HepG2 (cell line): ENCODE measurements at regions of chr6 and their contacts with region 1.

Region 1: GRCh38 chr6:47103931-47104330 is 61.8 kb upstream of the ADGRF1 start:
- DNase-seq: no peak
- ATAC-seq: no peak
- H3K4me3 ChIP-seq: no peak overlapping the region
- H3K27ac ChIP-seq: no peak overlapping the region
- H3K4me1 ChIP-seq: peaks cover 28% of the 10 kb centered on the region
- H3K27me3 ChIP-seq: no peaks in the 10 kb centered on the region
- CTCF ChIP-seq: no peak
- EP300 ChIP-seq: no peak
- POLR2A ChIP-seq: no peak
- RAD21 ChIP-seq: no peak

Region 2: DNA sequence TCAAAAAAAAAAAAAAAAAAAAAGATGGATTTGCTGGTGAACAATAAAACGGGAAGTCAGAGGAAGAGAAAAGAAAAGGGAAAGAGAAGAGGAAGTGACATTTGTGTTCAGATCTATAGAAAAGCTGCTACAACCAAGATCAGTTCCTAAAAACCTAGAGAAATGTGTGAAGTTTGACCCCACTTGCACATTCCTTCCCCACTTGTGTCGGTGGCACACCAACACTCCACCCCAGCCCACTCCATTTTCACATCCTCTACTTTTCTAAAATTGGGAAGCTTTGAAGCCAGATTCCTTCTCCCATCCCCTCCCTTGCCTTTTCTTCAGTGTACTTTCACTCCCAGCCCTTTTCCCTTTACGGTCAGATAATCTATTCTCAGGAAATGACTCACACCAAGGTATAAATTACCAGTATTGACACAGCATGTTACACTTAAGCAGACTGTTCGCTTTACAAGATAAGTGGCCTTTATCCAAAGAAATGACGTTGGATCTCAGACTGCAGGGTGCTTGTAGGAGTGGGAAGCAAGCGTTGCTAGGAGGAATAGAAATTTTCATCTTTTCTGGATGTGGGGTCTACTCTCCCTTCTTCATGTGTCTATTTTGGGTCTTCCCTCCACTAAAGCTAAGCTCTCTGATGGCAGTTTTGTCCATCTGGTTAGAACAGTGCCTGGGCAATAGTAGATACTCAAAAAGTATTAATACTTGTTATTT is 30.7 kb after region 1 on chr6:
- CTCF ChIA-PET with region 1: no interaction called
- POLR2A ChIA-PET with region 1: interaction called, 4 read pairs
- in situ Hi-C with region 1: no loop called
- intact Hi-C with region 1: loop called (anchors 2 kb)
- DNase-seq: peak; percentile 91
- ATAC-seq: peak; percentile 77
- H3K4me3 ChIP-seq: peak overlapping the region in 2 of 3 experiments; percentile 7; a peak in 2 of 6 replicates
- H3K27ac ChIP-seq: peak overlapping the region; percentile 74
- H3K4me1 ChIP-seq: peaks cover 84% of the 10 kb centered on the region
- H3K27me3 ChIP-seq: no peaks in the 10 kb centered on the region
- CTCF ChIP-seq: no peak
- EP300 ChIP-seq: peak in 1 of 2 experiments; percentile 97; a peak in 2 of 4 replicates
- POLR2A ChIP-seq: no peak
- RAD21 ChIP-seq: no peak

Region 3: DNA sequence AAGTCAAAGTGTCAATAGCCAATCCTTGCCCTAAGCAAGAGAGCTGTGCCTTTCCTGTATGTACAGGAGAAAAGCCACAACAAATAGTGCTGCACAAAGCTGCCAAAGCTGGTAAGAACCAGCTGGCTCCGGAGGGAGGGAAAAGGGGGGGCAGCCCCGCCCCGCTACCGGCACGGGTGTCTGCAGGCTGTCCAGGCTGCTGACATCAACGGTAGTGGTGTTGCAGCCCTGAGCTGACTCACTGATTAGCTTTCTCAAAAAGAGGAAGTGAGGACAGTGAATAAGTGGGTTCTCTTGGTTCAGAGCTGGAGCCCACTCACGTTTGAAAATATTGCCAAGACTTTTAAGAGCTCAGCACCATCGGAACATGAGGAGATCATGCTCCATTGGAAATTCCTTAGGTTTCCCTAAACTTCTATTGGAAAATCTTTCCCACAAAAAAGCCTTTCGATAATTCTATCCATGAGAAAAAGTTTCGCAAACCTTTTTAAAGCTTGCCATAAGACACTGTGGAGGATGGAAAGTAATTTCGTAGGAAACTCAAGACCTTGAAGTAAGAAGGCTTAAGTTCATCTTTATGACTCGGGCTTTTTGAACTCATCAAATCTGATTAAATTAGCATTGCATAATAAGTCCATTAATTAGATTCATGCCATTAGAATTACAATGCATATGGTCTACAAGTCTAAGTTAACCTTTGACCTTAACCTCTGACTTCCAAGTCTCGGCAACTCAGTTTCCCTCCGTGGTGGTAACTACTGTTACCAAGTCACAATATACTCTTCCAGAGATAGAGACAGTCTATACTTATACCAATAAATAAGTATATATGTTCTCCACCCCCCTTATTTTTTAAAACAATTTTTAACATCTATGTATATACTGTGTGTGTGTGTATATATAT is 138.8 kb after region 1 on chr6:
- CTCF ChIA-PET with region 1: no interaction called
- POLR2A ChIA-PET with region 1: no interaction called
- in situ Hi-C with region 1: loop called (anchors 10 kb)
- intact Hi-C with region 1: loop called (anchors 5 kb)
- DNase-seq: no peak
- ATAC-seq: no peak
- H3K4me3 ChIP-seq: no peak overlapping the region
- H3K27ac ChIP-seq: no peak overlapping the region
- H3K4me1 ChIP-seq: peaks cover 8% of the 10 kb centered on the region
- H3K27me3 ChIP-seq: no peaks in the 10 kb centered on the region
- CTCF ChIP-seq: no peak
- EP300 ChIP-seq: no peak
- POLR2A ChIP-seq: no peak
- RAD21 ChIP-seq: no peak